ENCODE measurements at regions of chr1 and their contacts with region 1.

Region 1: DNA sequence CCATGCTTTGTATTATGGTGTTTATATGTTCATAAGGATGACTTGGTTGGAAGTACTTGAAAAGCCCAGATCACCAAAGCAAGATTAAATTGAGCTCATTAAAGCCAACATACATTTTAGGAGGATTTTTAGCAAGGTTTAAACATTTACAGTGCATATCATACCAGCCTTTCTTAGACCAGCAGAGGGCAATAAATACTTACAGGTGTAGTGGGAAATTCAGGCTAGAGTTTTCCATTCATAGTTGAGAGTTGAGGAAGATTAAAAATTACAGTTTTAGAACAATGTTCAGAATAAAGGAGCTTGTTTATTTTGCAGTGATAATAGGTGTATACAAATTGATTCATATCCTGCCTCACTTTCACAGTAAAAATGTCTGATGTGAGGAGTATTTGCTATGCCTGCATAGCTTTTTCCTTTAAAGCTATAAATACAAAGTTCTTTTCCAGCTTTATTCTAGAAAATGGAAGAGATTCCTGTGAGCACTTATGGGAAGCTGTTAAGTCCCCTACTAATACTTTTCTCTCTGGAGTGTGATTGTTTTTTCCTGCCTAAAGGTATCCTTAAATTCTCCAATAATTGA is 35.3 kb downstream of the DTL start:
- DNase-seq: peak; percentile 14 to 43
- ATAC-seq: peak; percentile 74 to 80; a peak in 4 of 6 replicates
- H3K4me3 ChIP-seq: no peak overlapping the region
- H3K27ac ChIP-seq: no peak overlapping the region
- H3K4me1 ChIP-seq: no peaks in the 10 kb centered on the region
- CTCF ChIP-seq: peak; percentile 80
- EP300 ChIP-seq: no peak
- POLR2A ChIP-seq: no peak
- RAD21 ChIP-seq: peak; percentile 78 to 88

Region 2: DNA sequence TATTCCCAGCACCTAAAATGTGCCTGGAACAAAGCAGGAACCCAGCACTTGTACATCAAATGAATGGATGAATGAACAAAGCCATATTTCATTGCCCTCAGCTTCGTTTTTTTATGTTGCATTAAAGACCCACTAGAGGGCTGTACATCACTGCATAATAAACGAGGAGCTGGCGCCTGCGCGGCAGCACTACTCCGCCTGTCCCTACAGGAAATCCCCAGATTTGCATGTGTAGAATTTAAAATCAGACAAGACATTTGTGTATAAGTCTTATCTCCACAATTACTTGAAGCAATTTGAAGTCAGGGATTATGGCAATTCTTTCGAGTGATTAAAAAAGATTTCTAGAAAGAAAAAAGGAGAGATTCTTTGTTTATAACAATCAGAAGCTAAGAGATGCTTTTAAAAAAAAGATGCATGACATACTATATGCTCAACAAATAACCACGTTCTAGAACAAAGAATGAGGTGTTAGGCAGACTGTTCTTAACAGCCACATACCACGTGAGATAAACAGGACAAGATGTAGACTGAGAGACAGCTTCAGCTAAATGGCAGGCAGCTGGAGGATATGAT is 390.0 kb before region 1 on chr1:
- CTCF ChIA-PET with region 1: interaction called, 17 read pairs
- POLR2A ChIA-PET with region 1: no interaction called
- DNase-seq: peak; percentile 89 to 91
- ATAC-seq: peak; percentile 84 to 88
- H3K4me3 ChIP-seq: no peak overlapping the region
- H3K27ac ChIP-seq: peak overlapping the region; percentile 50 to 71; a peak in 5 of 6 replicates
- H3K4me1 ChIP-seq: peaks cover 9% of the 10 kb centered on the region
- CTCF ChIP-seq: peak; percentile 95
- EP300 ChIP-seq: no peak
- POLR2A ChIP-seq: no peak
- RAD21 ChIP-seq: peak; percentile 96 to 97

Region 3: DNA sequence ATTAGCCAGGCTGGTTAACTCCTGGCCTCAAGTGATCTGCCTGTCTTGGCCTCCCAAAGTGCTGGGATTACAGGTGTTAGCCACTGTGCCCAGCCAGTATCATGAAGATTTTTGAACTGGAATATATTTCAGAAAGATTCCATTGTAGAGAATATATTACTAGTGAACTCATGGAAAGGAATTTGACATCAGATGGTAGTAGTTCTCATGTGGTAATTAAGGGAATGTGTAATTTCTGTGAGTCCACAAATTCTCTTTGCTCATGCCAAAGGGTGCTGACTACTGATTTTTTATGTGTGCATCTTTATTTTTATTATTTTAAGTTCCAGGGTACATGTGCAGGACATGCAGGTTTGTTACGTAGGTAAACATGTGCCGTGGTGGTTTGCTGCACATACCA is 24.8 kb before region 1 on chr1:
- CTCF ChIA-PET with region 1: interaction called, 19 read pairs
- POLR2A ChIA-PET with region 1: no interaction called
- DNase-seq: no peak
- ATAC-seq: no peak
- H3K4me3 ChIP-seq: no peak overlapping the region
- H3K27ac ChIP-seq: no peak overlapping the region
- H3K4me1 ChIP-seq: peaks cover 3% of the 10 kb centered on the region
- CTCF ChIP-seq: no peak
- EP300 ChIP-seq: no peak
- POLR2A ChIP-seq: no peak
- RAD21 ChIP-seq: no peak

Region 4: DNA sequence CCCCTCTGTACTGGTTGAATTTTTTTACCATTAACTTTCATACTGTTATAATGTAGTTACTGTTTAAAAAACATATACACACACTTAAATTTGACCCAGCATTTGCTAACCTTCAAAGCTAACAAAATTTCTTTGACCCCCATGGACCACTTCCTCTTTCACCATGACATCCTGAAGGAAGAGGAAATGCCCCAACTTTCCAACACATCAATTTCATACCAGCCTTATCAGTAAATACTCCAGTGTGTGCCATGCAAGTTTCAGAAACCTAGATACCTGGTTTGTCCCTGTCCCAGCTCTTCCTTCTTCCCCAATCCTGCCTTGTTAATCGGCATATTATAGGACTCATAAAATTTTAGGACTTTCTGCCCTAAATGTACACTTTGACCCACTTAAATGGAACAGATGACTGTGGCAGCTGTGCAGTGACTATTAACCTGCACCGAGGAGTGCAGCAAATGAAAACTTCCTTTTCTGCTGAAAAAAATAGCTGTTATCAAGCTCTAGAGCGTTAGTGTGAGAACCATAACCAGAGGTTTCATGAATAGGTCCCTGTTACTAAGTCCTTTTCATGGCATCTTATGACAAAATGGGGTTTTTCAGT is 18.9 kb after region 1 on chr1:
- CTCF ChIA-PET with region 1: interaction called, 28 read pairs
- POLR2A ChIA-PET with region 1: no interaction called
- DNase-seq: no peak
- ATAC-seq: no peak
- H3K4me3 ChIP-seq: no peak overlapping the region
- H3K27ac ChIP-seq: no peak overlapping the region
- H3K4me1 ChIP-seq: no peaks in the 10 kb centered on the region
- CTCF ChIP-seq: no peak
- EP300 ChIP-seq: no peak
- POLR2A ChIP-seq: no peak
- RAD21 ChIP-seq: no peak

Region 5: DNA sequence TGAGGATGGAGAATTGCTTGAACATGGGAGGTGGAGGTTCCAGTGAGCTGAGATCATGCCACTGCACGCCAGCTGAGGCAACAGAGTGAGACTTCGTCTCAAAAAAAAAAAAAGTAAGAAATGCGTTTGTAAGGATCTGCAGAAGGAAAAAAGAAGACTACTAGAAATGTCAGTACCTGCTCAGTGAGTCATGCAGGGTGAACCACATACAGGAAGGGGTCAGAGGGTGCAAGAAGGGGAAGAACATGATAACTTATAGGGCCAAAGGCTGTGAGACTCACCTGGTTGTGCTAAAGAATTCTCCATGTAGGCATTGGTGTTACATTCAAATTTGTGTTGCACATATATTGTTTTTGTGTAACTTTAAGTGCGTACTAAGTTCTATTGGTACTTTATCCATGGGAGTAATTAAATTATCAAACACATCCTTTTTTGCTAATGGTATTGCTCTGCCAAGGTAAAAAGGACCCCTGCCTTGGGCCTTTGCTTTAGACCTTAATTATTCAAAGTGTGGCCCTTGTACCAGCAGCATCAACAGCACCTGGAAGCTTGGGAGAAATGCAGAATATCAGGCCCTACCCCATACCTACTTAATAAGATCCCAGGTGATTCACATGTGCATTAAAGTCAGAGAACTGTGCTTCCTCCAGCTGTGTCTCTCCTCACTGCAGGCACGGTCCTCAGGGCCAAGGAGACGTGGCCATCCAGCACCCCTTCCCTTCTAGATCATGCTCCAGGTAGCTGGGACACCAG is 118.0 kb after region 1 on chr1:
- CTCF ChIA-PET with region 1: no interaction called
- POLR2A ChIA-PET with region 1: no interaction called
- DNase-seq: no peak
- ATAC-seq: no peak
- H3K4me3 ChIP-seq: no peak overlapping the region
- H3K27ac ChIP-seq: no peak overlapping the region
- H3K4me1 ChIP-seq: no peaks in the 10 kb centered on the region
- CTCF ChIP-seq: no peak
- EP300 ChIP-seq: no peak
- POLR2A ChIP-seq: no peak
- RAD21 ChIP-seq: no peak

Region 6: DNA sequence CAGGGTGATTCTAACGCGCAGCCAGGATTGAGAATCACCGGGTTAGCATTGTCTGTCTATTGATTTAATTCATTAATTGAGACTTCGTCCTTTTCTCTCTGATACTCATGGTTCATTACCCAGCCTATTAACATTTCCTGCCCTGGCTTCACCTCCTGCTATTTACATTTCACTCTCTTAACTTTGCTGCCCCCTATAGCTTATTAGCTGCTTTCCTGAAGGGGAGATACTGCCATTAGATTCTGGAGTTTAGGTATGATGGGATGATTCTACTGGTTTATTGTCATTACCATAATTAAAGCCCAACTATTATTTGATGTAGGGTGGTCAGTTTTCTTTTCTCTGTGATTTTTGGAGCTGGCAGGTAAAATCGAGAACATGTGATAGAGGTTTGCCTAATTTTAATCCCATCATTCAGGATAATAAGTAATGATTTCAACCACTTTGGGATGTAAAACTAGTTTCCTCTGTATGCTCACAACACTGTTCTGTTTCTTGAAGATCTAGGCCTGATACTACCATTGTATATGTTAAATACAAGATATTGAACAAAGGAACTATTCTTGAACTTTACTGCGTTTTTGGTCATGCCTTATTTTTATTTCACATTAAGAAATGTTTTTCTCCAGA is 220.8 kb after region 1 on chr1:
- CTCF ChIA-PET with region 1: interaction called, 105 read pairs
- POLR2A ChIA-PET with region 1: interaction called, 4 read pairs
- DNase-seq: peak; percentile 44 to 66
- ATAC-seq: peak; percentile 81 to 85
- H3K4me3 ChIP-seq: no peak overlapping the region
- H3K27ac ChIP-seq: 0 out of 6 replicates have a peak overlapping the region, but pooled peaks of 1 of the 2 experiments have one; percentile 32
- H3K4me1 ChIP-seq: peaks cover 45% of the 10 kb centered on the region
- CTCF ChIP-seq: peak; percentile 69
- EP300 ChIP-seq: no peak
- POLR2A ChIP-seq: no peak
- RAD21 ChIP-seq: peak; percentile 77 to 82

Region 7: DNA sequence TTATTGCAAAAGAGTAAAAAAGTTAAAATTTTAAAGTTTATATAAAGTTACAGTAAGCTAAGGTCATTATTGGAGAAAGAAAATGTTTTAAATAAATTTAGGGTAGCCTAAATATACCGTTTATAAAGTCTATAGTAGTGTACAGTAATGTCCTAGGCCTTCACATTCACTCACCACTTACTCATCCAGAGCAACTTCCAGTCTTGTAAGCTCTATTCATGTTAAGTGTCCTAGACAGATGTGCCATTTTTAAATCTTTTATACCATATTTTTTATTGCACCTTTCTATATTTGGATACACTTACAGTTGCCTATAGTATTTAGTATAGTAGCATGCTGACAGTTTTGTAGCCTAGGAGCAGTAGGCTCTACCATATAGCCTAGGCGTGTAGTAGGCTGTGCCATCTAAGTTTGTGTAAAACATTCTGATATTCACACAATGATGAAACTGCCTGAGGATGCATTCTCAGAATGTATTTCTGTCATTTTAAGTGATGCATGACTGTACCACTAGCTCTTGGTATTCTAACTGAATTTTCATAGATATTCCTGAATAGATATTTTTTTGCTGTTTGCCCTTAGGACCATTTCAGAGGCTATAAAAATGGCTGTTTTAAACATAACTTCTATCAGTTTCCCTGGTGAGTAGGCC is 241.2 kb after region 1 on chr1:
- CTCF ChIA-PET with region 1: interaction called, 24 read pairs
- POLR2A ChIA-PET with region 1: no interaction called
- DNase-seq: no peak
- ATAC-seq: no peak
- H3K4me3 ChIP-seq: no peak overlapping the region
- H3K27ac ChIP-seq: no peak overlapping the region
- H3K4me1 ChIP-seq: peaks cover 9% of the 10 kb centered on the region; the same call in 1 of the 3 replicates
- CTCF ChIP-seq: no peak
- EP300 ChIP-seq: no peak
- POLR2A ChIP-seq: no peak
- RAD21 ChIP-seq: no peak

Region 8: GRCh38 chr1:212368073-212368484 is 297.3 kb after region 1 on chr1:
- CTCF ChIA-PET with region 1: interaction called, 80 read pairs
- POLR2A ChIA-PET with region 1: no interaction called
- DNase-seq: peak; percentile 54 to 74
- ATAC-seq: peak; percentile 97 to 98
- H3K4me3 ChIP-seq: no peak overlapping the region
- H3K27ac ChIP-seq: no peak overlapping the region
- H3K4me1 ChIP-seq: no peaks in the 10 kb centered on the region
- CTCF ChIP-seq: peak; percentile 76
- EP300 ChIP-seq: no peak
- POLR2A ChIP-seq: no peak
- RAD21 ChIP-seq: peak; percentile 78 to 83